GM12878 (cell line): ENCODE measurements at regions of chr1 and their contacts with region 1.

Region 1: DNA sequence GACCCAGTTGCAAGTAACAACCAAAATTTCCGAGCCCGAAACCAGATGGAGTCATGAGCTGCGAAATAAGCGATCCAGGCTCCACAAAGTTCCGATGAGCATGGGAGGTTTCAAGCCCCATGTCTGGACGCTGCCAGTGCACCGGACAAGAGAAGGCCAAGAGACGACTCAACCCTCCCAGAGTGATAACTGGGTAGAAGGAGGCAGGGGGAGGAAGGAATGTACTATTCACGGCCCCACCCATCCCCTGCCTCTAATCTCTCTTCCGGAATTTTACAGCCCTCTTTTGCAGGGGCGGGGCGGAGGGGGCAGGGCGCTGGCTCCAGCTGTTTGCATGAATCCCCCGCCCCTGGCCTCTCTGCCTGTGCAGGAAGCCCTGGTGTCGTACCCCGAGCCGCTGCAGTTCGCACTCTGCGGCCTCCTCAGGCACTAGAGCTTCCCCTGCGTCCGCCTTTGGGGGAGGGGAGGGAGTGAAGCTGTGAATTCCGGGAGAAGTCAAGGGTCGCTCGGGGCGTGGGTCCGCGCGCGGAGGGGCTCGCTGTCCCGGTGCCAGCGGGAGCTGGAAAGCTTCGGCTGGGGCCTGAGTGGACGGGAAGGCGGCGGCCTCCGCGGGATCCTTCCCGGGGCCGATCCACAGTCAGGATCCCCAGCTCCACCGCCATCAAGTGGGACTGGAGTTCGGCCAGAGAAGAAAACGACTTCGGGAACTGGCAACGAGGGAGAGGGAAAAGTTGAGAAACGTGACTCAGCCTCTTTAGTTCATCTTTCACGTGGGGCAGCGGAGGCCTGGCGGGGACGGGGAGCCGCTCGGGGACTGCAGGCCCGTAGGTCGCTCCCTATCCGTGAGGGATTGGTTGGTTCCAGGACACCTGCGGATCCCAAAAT is 6.3 kb upstream of the PTP4A2 start:
- DNase-seq: peak; percentile 75
- ATAC-seq: peak; percentile 85
- H3K4me3 ChIP-seq: peak overlapping the region; percentile 78
- H3K27ac ChIP-seq: peak overlapping the region; percentile 94
- H3K4me1 ChIP-seq: peaks cover 38% of the 10 kb centered on the region
- H3K27me3 ChIP-seq: no peaks in the 10 kb centered on the region
- CTCF ChIP-seq: no peak
- EP300 ChIP-seq: 0 out of 4 replicates have a peak, but pooled peaks of 1 of the 2 experiments have one; percentile 25
- POLR2A ChIP-seq: peak; percentile 99
- RAD21 ChIP-seq: no peak; the same call in 1 of the 2 replicates

Region 2: GRCh38 chr1:31422505-31423319 is 521.7 kb before region 1 on chr1:
- CTCF ChIA-PET with region 1: no interaction called
- POLR2A ChIA-PET with region 1: no interaction called
- RAD21 ChIA-PET with region 1: no interaction called
- SMC1A ChIA-PET with region 1: no interaction called
- in situ Hi-C with region 1: no loop called
- intact Hi-C with region 1: no loop called
- DNase-seq: peak; percentile 47
- ATAC-seq: peak; percentile 71
- H3K4me3 ChIP-seq: peak overlapping the region; percentile 29; the same call in 1 of the 2 replicates
- H3K27ac ChIP-seq: no peak overlapping the region
- H3K4me1 ChIP-seq: peaks cover 11% of the 10 kb centered on the region
- H3K27me3 ChIP-seq: no peaks in the 10 kb centered on the region
- CTCF ChIP-seq: peak; percentile 94 to 96 (median 95)
- EP300 ChIP-seq: no peak
- POLR2A ChIP-seq: no peak
- RAD21 ChIP-seq: peak; percentile 80

Region 3: GRCh38 chr1:31843506-31843905 is 100.9 kb before region 1 on chr1:
- CTCF ChIA-PET with region 1: no interaction called
- POLR2A ChIA-PET with region 1: no interaction called
- RAD21 ChIA-PET with region 1: no interaction called
- SMC1A ChIA-PET with region 1: no interaction called
- in situ Hi-C with region 1: no loop called
- intact Hi-C with region 1: no loop called
- DNase-seq: no peak
- ATAC-seq: no peak
- H3K4me3 ChIP-seq: no peak overlapping the region
- H3K27ac ChIP-seq: no peak overlapping the region
- H3K4me1 ChIP-seq: peaks cover 5% of the 10 kb centered on the region
- H3K27me3 ChIP-seq: no peaks in the 10 kb centered on the region
- CTCF ChIP-seq: no peak
- EP300 ChIP-seq: no peak
- POLR2A ChIP-seq: no peak
- RAD21 ChIP-seq: no peak

Region 4: GRCh38 chr1:31923901-31924535 is 20.4 kb before region 1 on chr1:
- CTCF ChIA-PET with region 1: interaction called, 15 read pairs
- POLR2A ChIA-PET with region 1: interaction called, 17 read pairs
- RAD21 ChIA-PET with region 1: interaction called, 7 read pairs
- SMC1A ChIA-PET with region 1: interaction called, 15 read pairs
- in situ Hi-C with region 1: no loop called
- intact Hi-C with region 1: no loop called
- DNase-seq: no peak
- ATAC-seq: 0 out of 3 replicates have a peak, but pooled peaks have one; percentile 11
- H3K4me3 ChIP-seq: peak overlapping the region; percentile 43; the same call in 1 of the 2 replicates
- H3K27ac ChIP-seq: 0 out of 2 replicates have a peak overlapping the region, but pooled peaks have one; percentile 27
- H3K4me1 ChIP-seq: peaks cover 19% of the 10 kb centered on the region
- H3K27me3 ChIP-seq: no peaks in the 10 kb centered on the region
- CTCF ChIP-seq: no peak
- EP300 ChIP-seq: no peak
- POLR2A ChIP-seq: no peak
- RAD21 ChIP-seq: no peak

Region 5: GRCh38 chr1:31931593-31932225 is 12.7 kb before region 1 on chr1:
- CTCF ChIA-PET with region 1: interaction called, 15 read pairs
- POLR2A ChIA-PET with region 1: interaction called, 104 read pairs
- RAD21 ChIA-PET with region 1: interaction called, 55 read pairs
- SMC1A ChIA-PET with region 1: interaction called, 51 read pairs
- in situ Hi-C with region 1: no loop called
- intact Hi-C with region 1: no loop called
- DNase-seq: no peak
- ATAC-seq: peak; percentile 4; the same call in 1 of the 3 replicates
- H3K4me3 ChIP-seq: peak overlapping the region; percentile 84
- H3K27ac ChIP-seq: peak overlapping the region; percentile 93
- H3K4me1 ChIP-seq: peaks cover 25% of the 10 kb centered on the region
- H3K27me3 ChIP-seq: no peaks in the 10 kb centered on the region
- CTCF ChIP-seq: no peak
- EP300 ChIP-seq: no peak
- POLR2A ChIP-seq: no peak
- RAD21 ChIP-seq: no peak